ENCODE measurements at regions of chr15 and their contacts with region 1.

Region 1: DNA sequence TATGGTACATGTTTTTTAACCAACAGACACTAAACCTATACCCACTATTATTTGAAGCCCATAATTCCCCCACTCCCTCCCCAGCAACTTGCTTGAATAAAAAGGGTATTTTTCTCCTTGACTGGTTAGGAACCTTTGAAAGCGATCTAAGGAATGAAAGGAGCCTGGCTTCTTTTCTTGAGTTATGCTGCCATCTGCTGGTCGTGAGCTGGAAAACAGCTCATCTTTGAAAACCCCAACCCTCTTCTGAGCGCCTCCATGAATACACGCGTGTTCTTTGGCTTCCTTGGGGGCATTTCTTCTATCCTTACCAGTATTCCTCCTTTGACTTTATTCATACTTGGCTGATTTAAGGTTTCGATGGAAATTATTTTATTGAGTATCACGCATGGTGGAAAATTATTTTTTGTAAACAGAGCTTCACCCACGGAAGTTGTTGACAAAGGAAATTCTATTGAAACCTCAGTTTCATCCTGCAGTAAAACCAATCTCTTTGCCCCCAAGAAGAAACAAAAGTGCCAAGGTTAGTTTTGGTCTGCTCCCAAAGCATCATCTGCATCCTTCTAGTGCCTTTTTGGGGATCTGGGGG is 171.6 kb downstream of the SV2B start:
- DNase-seq: peak; percentile 46 to 57
- H3K4me3 ChIP-seq: no peak overlapping the region
- H3K27ac ChIP-seq: no peak overlapping the region
- H3K4me1 ChIP-seq: no peaks in the 10 kb centered on the region
- H3K27me3 ChIP-seq: no peaks in the 10 kb centered on the region
- CTCF ChIP-seq: peak in 5 of 6 experiments; percentile 30 to 76 (median 73)
- POLR2A ChIP-seq: no peak

Region 2: GRCh38 chr15:91055548-91056331 is 215.9 kb before region 1 on chr15:
- intact Hi-C with region 1: loop called (anchors 2 kb)
- DNase-seq: peak; percentile 53 to 60
- H3K4me3 ChIP-seq: no peak overlapping the region
- H3K27ac ChIP-seq: no peak overlapping the region
- H3K4me1 ChIP-seq: no peaks in the 10 kb centered on the region
- H3K27me3 ChIP-seq: no peaks in the 10 kb centered on the region
- CTCF ChIP-seq: peak in 5 of 6 experiments; percentile 54 to 73 (median 65)
- POLR2A ChIP-seq: no peak

Region 3: GRCh38 chr15:91578511-91578910 is 306.9 kb after region 1 on chr15:
- intact Hi-C with region 1: no loop called
- DNase-seq: no peak
- H3K4me3 ChIP-seq: no peak overlapping the region
- H3K27ac ChIP-seq: no peak overlapping the region
- H3K4me1 ChIP-seq: no peaks in the 10 kb centered on the region
- H3K27me3 ChIP-seq: no peaks in the 10 kb centered on the region
- CTCF ChIP-seq: no peak
- POLR2A ChIP-seq: no peak